Psoas muscle (tissue), 8 donors: ENCODE measurements at regions of chr2 and their contacts with region 1.

Region 1: GRCh38 chr2:151808258-151809072 is 19.8 kb downstream of the ARL5A start:
- DNase-seq: no peak
- ATAC-seq: peak in 3 of 4 donors; percentile 65 to 83 (median 74)
- H3K4me3 ChIP-seq: no peak overlapping the region
- H3K27ac ChIP-seq: no peak overlapping the region
- H3K4me1 ChIP-seq: peaks cover 18% of the 10 kb centered on the region
- H3K27me3 ChIP-seq: no peaks in the 10 kb centered on the region
- CTCF ChIP-seq: peak; percentile 68

Region 2: GRCh38 chr2:151707857-151708256 is 100.6 kb before region 1 on chr2:
- intact Hi-C with region 1: loop called in 1 of 2 experiments (anchors 5 kb)
- DNase-seq: no peak
- ATAC-seq: peak in 1 of 4 donors; percentile 9
- H3K4me3 ChIP-seq: no peak overlapping the region
- H3K27ac ChIP-seq: peak overlapping the region; percentile 46
- H3K4me1 ChIP-seq: peaks cover 58% of the 10 kb centered on the region
- H3K27me3 ChIP-seq: no peaks in the 10 kb centered on the region
- CTCF ChIP-seq: no peak

Region 3: DNA sequence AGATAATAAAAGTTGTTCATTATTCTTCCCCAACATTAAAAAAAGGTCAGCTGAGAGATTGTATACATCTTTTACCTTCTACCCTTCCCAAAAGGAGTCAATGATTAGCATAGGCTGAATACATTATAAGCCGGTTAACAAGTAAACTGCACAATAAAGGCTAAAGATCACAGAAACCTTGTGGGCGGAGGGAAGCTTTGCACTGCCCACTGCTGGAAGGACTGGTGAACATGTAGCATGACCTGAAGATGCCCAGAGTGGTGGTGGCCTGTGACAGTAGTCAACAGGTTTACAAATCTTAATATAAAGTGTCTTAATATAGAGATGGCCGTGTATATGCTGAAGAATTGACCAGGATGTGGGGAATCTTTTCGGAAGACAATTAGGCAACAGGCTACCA is 15.9 kb before region 1 on chr2:
- intact Hi-C with region 1: no loop called
- DNase-seq: no peak
- ATAC-seq: peak in 2 of 4 donors; percentile 57 to 63
- H3K4me3 ChIP-seq: no peak overlapping the region
- H3K27ac ChIP-seq: no peak overlapping the region
- H3K4me1 ChIP-seq: peaks cover 20% of the 10 kb centered on the region
- H3K27me3 ChIP-seq: no peaks in the 10 kb centered on the region
- CTCF ChIP-seq: peak; percentile 30